PC-9 (cell line): ENCODE measurements at regions of chr14 and their contacts with region 1.

Region 1: GRCh38 chr14:53670701-53671100 is 285.9 kb downstream of the BMP4 start:
- DNase-seq: no peak
- H3K4me3 ChIP-seq: no peak overlapping the region
- H3K27ac ChIP-seq: no peak overlapping the region
- H3K4me1 ChIP-seq: no peaks in the 10 kb centered on the region
- H3K27me3 ChIP-seq: no peaks in the 10 kb centered on the region
- CTCF ChIP-seq: no peak

Region 2: DNA sequence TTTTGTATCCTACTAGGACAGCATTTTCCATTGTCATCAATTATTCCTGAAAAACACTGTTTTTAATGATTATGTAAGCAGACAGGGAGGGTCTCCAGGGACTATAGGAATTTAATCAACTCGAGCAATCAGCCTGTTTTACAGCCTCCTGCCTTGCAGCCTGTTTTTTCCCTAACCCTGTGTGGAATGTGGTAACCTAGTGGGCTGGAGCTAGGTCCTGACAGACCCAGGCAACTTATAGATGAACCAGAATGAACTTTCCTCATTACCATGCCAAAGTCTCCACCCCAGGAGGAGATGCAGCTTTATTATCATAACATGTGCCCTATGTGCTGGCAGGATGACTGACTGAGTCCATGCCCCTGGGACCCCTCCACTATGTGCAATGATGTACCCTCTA is 89.2 kb before region 1 on chr14:
- CTCF ChIA-PET with region 1: interaction called, 13 read pairs
- POLR2A ChIA-PET with region 1: no interaction called
- intact Hi-C with region 1: no loop called
- DNase-seq: no peak
- H3K4me3 ChIP-seq: no peak overlapping the region
- H3K27ac ChIP-seq: no peak overlapping the region
- H3K4me1 ChIP-seq: no peaks in the 10 kb centered on the region
- H3K27me3 ChIP-seq: no peaks in the 10 kb centered on the region
- CTCF ChIP-seq: no peak

Region 3: DNA sequence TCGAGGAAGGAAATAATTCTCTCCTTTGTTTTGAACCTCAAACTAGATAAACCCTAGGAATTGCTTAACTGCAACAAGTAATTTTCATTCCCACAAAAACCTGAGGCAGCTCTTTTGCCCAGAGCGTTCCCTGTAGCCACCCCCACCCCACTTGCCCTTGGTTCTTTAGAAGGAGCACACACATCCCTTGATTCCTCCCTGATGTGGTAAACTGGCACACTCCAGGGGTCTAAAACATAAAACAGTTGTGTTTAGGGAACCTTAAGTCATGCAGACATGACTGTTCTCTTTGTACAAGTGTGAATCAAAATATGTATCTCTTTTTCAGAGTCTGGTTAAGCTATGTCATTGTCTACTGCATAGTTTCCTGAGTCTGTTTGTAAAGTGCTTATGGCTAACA is 1394.7 kb after region 1 on chr14:
- CTCF ChIA-PET with region 1: no interaction called
- POLR2A ChIA-PET with region 1: interaction called, 14 read pairs
- intact Hi-C with region 1: no loop called
- DNase-seq: no peak
- H3K4me3 ChIP-seq: no peak overlapping the region
- H3K27ac ChIP-seq: no peak overlapping the region
- H3K4me1 ChIP-seq: no peaks in the 10 kb centered on the region
- H3K27me3 ChIP-seq: no peaks in the 10 kb centered on the region
- CTCF ChIP-seq: no peak